ENCODE measurements at regions of chrX and their contacts with region 1.

Region 1: DNA sequence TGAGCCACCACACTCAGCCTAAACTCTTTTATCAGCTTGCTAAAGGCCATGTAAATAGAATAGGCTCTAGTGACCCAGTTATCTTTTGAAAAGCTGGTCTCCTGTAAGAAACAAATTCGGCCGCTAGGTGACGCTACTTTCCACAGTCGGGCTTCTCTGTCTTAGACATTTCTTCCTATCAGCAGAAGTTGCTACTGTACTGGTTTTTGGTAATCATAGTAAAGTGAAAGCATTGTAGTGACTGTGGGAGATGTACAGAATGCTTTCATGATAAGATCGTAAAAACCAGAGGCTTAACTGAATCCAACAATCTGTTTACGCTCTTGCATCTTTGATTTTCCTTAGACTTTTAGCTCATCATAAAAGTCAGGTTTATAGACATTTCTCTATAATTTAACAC is 82.6 kb downstream of the GK start:
- DNase-seq: peak; percentile 32 to 61
- ATAC-seq: peak; percentile 73 to 88; a peak in 4 of 6 replicates
- H3K4me3 ChIP-seq: no peak overlapping the region
- H3K27ac ChIP-seq: no peak overlapping the region
- H3K4me1 ChIP-seq: no peaks in the 10 kb centered on the region
- CTCF ChIP-seq: peak; percentile 74
- EP300 ChIP-seq: no peak
- POLR2A ChIP-seq: no peak
- RAD21 ChIP-seq: peak; percentile 59 to 73

Region 2: GRCh38 chrX:30748393-30748841 is 12.6 kb after region 1 on chrX:
- CTCF ChIA-PET with region 1: interaction called, 14 read pairs
- POLR2A ChIA-PET with region 1: no interaction called
- DNase-seq: no peak
- ATAC-seq: no peak
- H3K4me3 ChIP-seq: no peak overlapping the region
- H3K27ac ChIP-seq: no peak overlapping the region
- H3K4me1 ChIP-seq: no peaks in the 10 kb centered on the region
- CTCF ChIP-seq: no peak
- EP300 ChIP-seq: no peak
- POLR2A ChIP-seq: no peak
- RAD21 ChIP-seq: no peak

Measured in A549 (cell line).